GM13977 (cell line): ENCODE measurements at regions of chr5 and their contacts with region 1.

Region 1: DNA sequence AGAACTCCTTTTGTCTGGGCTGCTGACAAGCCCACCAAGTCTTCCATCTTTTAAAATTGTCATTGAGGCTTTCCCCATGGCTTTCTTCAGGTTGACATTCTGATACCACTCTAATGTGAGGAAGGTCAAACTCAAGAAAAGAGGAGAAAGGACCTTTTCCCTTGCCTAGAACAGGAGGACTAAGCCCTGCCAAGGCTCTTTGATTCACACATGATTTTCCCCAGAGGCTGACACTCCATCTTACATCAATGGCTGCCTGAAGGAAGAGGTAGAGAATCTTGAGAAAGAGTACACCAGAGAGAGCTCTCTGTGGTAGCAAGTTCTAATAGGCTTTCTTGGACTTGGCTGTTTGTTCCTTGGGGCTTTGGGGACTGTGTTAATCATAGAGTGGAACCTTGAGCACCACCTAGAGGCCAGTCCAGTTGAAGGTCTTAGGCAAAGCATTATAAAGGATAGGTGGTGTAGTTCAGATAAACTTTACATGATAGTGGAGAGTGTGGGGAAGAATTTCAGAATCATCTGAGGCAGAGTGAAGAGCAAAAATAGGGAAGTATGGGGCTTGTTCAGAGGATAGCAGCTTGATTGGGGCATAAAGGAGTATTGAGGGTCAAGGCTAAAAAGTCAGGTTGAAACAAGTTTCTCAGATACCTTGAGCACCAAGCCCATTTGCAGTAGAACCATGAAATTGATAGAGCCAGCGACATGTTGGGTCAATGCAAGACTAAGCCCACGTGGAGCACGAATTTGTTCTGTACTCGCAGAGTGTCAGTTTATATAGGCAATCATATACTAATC is 36.7 kb downstream of the NDFIP1 start:
- DNase-seq: peak; percentile 54
- CTCF ChIP-seq: peak; percentile 72

Region 2: GRCh38 chr5:141992349-141992963 is 152.8 kb before region 1 on chr5:
- in situ Hi-C with region 1: loop called (anchors 10 kb)
- DNase-seq: peak; percentile 58
- CTCF ChIP-seq: peak; percentile 68